ENCODE measurements at regions of chr3 and their contacts with region 1.

Region 1: DNA sequence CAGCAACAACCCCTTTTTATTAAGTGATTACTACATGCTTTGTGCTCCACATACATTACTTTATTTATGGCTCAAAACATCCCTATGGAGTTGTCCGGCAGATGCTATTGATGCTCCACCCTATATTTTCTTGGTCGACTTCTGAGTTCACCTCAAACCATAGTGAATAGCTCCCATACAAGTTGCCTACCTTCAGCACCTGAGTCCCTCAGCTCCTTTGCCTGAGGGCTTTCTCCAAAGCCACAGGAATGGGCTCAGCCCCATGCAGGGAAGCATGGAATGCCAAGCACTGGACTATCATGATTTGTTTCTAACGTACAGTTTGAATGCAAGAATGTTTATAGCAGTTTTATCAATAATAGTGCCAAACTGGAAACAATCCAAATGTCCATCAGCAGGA is 124.8 kb upstream of the TNIK start:
- DNase-seq: no peak
- ATAC-seq: no peak
- H3K4me3 ChIP-seq: no peak overlapping the region
- H3K27ac ChIP-seq: no peak overlapping the region
- H3K4me1 ChIP-seq: no peaks in the 10 kb centered on the region
- H3K27me3 ChIP-seq: no peaks in the 10 kb centered on the region
- CTCF ChIP-seq: no peak
- EP300 ChIP-seq: no peak
- POLR2A ChIP-seq: no peak
- RAD21 ChIP-seq: no peak

Region 2: DNA sequence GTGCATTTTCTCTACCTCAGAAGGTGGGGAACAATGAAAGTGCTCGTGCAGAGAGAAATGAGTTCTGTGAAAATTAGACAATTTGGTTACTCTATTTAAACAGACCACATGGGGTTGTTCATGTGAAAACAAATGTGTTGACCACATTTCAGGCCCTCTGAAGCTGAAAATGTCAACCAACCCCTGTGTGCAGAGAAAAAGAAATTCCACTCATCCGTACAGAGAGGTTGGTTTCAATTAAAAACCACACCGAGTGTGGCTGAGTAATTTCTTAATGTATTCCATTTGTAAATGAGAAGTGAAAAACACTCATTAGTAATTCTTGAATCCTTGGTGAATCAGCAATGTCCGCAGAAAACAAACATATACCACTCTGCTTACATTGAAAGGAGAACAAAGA is 952.2 kb before region 1 on chr3:
- CTCF ChIA-PET with region 1: no interaction called
- POLR2A ChIA-PET with region 1: no interaction called
- in situ Hi-C with region 1: loop called (anchors 25 kb)
- intact Hi-C with region 1: no loop called
- DNase-seq: peak in 1 of 4 experiments; percentile 0
- ATAC-seq: no peak
- H3K4me3 ChIP-seq: no peak overlapping the region
- H3K27ac ChIP-seq: no peak overlapping the region
- H3K4me1 ChIP-seq: peaks cover 5 to 8% of the 10 kb centered on the region in 2 experiments; a peak in 2 of 5 replicates
- H3K27me3 ChIP-seq: no peaks in the 10 kb centered on the region
- CTCF ChIP-seq: no peak
- EP300 ChIP-seq: no peak
- POLR2A ChIP-seq: no peak
- RAD21 ChIP-seq: no peak

Region 3: DNA sequence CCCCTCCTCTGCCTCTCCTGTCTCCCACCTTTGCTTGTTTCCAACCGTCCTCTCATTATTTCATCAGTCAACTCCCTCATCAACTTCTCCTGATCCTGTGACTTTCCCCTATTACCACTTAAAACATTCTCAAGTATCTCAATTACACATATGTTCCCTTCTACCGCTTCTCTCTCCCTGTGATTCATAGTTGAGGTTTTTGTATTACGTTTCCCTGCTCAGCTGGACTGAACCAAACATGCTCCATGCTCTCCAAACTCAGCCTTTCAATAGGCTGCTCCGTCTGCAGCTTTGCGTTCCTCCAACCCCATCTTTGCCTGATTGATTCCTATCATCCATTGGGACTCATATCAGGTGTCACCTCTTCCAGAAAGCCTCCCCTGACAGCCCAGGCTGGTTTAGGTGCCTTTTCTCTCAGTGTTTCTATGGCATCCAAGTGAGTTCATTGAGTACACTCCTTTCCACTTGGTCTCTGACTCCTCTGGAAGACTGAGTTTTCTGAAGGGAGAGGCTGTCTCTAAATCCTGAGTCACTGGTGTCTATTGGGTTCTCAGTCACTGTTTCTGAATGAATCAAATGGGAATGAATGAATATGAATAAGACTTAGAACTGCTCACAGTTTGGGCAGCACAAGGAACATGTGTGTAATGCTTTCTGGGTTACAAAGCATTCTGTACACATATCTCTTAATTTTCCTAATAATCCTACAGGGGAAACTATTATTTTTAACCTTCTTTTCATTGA is 168.8 kb after region 1 on chr3:
- CTCF ChIA-PET with region 1: no interaction called
- POLR2A ChIA-PET with region 1: no interaction called
- in situ Hi-C with region 1: no loop called
- intact Hi-C with region 1: no loop called
- DNase-seq: no peak
- ATAC-seq: peak; percentile 35; the same call in 2 of the 3 replicates
- H3K4me3 ChIP-seq: no peak overlapping the region
- H3K27ac ChIP-seq: no peak overlapping the region
- H3K4me1 ChIP-seq: peaks cover 4 to 29% of the 10 kb centered on the region in 2 experiments; a peak in 4 of 5 replicates
- H3K27me3 ChIP-seq: no peaks in the 10 kb centered on the region; a peak in 1 of 5 replicates
- CTCF ChIP-seq: no peak
- EP300 ChIP-seq: no peak
- POLR2A ChIP-seq: no peak
- RAD21 ChIP-seq: no peak

Measured in K562 (cell line).